AG04450 (cell line): ENCODE measurements at regions of chr15 and their contacts with region 1.

Region 1: DNA sequence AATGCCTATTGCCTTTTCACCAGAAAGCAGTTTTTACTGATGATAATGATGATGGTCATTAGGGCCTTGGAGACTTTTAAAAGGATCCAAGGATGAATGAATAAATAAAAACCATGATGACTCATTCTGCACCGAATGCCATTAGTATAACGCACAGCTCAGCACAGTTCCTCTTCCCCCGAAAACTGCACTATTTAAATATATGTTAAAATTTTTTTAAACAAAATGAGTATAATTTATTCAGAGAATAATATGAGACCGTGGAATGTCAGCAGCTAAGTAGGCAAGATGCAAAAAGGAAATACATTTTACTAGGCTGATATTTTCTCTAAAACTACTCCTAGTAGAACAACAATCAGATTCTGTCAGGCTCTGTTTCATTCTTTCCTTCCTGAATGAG is 83.4 kb upstream of the NANOGP8 start:
- DNase-seq: peak; percentile 56
- H3K4me3 ChIP-seq: peak overlapping the region; percentile 23
- H3K27ac ChIP-seq: no peak overlapping the region
- H3K27me3 ChIP-seq: no peaks in the 10 kb centered on the region
- CTCF ChIP-seq: no peak

Region 2: GRCh38 chr15:35243758-35244157 is 75.3 kb after region 1 on chr15:
- CTCF ChIA-PET with region 1: no interaction called
- POLR2A ChIA-PET with region 1: interaction called, 14 read pairs
- DNase-seq: no peak
- H3K4me3 ChIP-seq: no peak overlapping the region
- H3K27ac ChIP-seq: no peak overlapping the region
- H3K27me3 ChIP-seq: no peaks in the 10 kb centered on the region
- CTCF ChIP-seq: no peak